B cell (primary cell): ENCODE measurements at regions of chr2 and their contacts with region 1.

Region 1: DNA sequence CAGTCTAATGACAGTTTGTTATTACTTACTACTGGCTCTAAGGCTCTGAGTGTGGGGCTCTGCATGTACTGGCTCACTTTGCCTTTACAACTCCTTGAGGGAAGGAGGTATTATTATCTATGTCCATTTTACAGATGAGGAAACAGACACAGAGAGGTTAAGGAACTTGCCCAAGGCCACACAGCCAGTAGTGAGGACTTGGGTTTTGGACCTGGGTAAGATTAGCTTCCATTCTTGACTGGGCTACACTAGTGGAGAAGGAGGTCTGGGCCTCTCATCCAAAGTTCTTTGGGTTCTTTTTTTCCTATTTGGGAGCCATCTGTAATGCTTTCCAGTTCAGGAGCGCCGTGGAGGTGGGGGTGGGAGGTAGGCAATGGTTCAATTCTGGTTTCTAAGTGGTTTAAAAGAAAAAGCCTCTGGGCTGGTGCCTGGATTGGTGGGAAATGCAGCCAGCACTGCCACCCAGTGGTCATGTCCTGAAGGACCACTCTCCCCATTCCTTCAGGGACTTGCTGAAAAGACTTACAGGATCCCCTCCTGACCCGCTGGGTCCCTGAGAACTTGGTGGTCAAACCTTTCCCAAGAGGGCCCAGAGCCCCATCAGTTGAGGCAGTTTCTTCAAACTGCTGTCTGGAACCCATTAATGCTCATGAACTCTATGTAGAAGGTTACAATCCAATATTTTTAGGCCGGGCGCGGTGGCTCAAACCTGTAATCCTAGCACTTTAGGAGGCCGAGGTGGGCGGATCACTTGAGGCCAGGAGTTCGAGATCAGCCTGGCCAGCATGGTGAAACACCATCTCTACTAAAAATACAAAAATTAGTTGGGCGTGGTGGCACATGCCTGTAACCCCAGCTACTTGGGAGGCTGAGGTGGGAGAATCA is 38.6 kb upstream of the NOTO start:
- DNase-seq: peak; percentile 71
- ATAC-seq: peak; percentile 84
- H3K4me3 ChIP-seq: no peak overlapping the region
- H3K4me3 Mint-ChIP-seq: no peak overlapping the region
- H3K27ac ChIP-seq: no peak overlapping the region
- H3K27ac Mint-ChIP-seq: no peak overlapping the region
- H3K4me1 ChIP-seq: no peaks in the 10 kb centered on the region
- H3K4me1 Mint-ChIP-seq: no peaks in the 10 kb centered on the region
- H3K27me3 ChIP-seq: peaks cover 0 to 3% (median 0%) of the 10 kb centered on the region in 4 experiments
- H3K27me3 Mint-ChIP-seq: peaks cover 24% of the 10 kb centered on the region
- CTCF ChIP-seq: peak; percentile 82

Region 2: GRCh38 chr2:72892506-72893173 is 271.1 kb before region 1 on chr2:
- CTCF ChIA-PET with region 1: interaction called, 8 read pairs
- POLR2A ChIA-PET with region 1: no interaction called
- intact Hi-C with region 1: loop called (anchors 1 kb)
- DNase-seq: peak; percentile 64
- ATAC-seq: peak; percentile 83
- H3K4me3 ChIP-seq: no peak overlapping the region
- H3K4me3 Mint-ChIP-seq: no peak overlapping the region
- H3K27ac ChIP-seq: no peak overlapping the region
- H3K27ac Mint-ChIP-seq: no peak overlapping the region
- H3K4me1 ChIP-seq: peaks cover 9 to 13% of the 10 kb centered on the region in 2 donors
- H3K4me1 Mint-ChIP-seq: peaks cover 9% of the 10 kb centered on the region
- H3K27me3 ChIP-seq: peaks cover 0 to 83% (median 26%) of the 10 kb centered on the region in 4 experiments
- H3K27me3 Mint-ChIP-seq: peaks cover 53% of the 10 kb centered on the region
- CTCF ChIP-seq: peak; percentile 66

Region 3: DNA sequence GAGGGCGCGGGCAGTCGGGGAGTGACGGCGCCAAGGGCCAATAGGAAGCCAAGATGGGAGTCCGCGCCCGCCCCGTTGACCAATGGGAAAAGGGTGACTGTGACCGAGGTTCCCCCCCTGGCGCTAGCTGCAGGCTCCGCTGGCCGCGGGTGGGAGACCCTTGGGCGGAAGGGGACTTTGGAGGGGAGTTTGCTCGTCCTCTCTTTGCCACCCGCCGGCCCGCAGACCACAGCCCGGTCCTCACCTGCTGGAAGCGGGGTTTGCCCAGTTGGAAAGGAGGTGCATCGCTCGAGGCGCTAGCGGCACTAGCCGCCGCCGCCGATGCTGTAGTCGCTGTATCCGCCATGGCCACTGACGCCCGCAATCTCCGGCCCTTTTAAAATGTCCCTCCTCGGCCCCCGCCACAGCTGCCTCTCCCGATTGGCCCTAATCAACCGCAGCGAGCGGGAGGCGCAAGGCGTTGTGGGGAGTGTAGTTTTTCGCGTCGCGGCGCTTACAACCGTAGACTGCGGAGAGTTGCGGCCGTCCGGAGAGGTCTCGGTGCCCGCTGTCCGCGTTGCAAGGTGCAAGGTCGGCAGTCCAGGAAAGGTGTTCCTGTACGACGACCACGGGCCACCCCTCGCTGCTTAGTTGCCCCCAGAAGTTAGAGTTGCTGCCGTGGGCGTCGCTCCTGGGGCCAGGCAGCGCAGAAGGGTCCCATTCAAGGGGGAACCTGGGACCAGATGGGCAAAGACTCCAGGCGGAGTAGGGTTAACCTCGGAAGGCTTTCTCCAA is 92.2 kb before region 1 on chr2 and contains the start of gene SFXN5:
- CTCF ChIA-PET with region 1: no interaction called
- POLR2A ChIA-PET with region 1: no interaction called
- intact Hi-C with region 1: loop called (anchors 5 kb)
- DNase-seq: peak; percentile 98
- ATAC-seq: peak; percentile 90
- H3K4me3 ChIP-seq: peak within 1 kb of the TSS; percentile 51 to 99 (median 86)
- H3K4me3 Mint-ChIP-seq: peak within 1 kb of the TSS; percentile 93
- H3K27ac ChIP-seq: peak within 1 kb of the TSS; percentile 77 to 84
- H3K27ac Mint-ChIP-seq: peak within 1 kb of the TSS; percentile 95
- H3K4me1 ChIP-seq: peaks cover 6 to 17% of the 10 kb centered on the region in 2 donors
- H3K4me1 Mint-ChIP-seq: peaks cover 24% of the 10 kb centered on the region
- H3K27me3 ChIP-seq: no peaks in the 10 kb centered on the region
- H3K27me3 Mint-ChIP-seq: no peaks in the 10 kb centered on the region
- CTCF ChIP-seq: no peak
- total RNA-seq, gene SFXN5: 16.9 and 17.8 TPM in 2 replicates

Region 4: DNA sequence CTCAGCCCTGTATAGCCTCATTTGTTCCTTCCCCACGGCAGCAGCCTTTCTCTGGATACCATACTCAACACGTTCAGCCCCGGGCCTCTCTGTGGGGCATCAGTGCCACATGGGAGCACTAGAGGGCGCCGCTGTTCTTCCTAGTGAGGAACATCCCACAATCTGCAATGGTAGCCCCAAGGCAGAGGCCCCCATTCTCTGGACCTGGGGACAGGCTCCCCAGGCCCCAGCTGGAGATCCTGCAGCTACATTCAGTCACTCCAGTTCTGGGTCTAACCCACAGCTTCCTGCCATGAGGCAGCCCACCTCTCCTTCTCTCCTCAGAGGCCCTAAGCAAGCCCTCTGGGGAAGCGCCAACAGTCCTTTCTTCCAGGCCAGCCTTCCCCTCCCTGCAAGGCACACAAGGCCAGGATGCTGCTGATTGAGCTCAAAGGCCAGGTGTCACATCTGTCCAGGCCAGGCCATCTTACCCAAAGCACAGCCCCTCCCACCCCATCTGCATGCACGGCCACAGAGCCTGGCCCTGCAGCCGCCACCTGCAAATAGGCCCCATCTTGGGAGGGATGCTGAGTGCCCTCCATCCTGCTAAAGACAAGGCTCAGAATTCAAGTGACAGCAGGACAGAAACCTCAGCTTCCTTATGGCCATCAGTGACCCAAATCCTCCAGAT is 77.9 kb before region 1 on chr2:
- CTCF ChIA-PET with region 1: interaction called, 26 read pairs
- POLR2A ChIA-PET with region 1: no interaction called
- intact Hi-C with region 1: loop called (anchors 1 kb)
- DNase-seq: peak; percentile 80
- ATAC-seq: peak; percentile 90
- H3K4me3 ChIP-seq: no peak overlapping the region
- H3K4me3 Mint-ChIP-seq: no peak overlapping the region
- H3K27ac ChIP-seq: no peak overlapping the region
- H3K27ac Mint-ChIP-seq: no peak overlapping the region
- H3K4me1 ChIP-seq: no peaks in the 10 kb centered on the region
- H3K4me1 Mint-ChIP-seq: no peaks in the 10 kb centered on the region
- H3K27me3 ChIP-seq: peaks cover 0 to 4% (median 2%) of the 10 kb centered on the region in 4 experiments
- H3K27me3 Mint-ChIP-seq: peaks cover 11% of the 10 kb centered on the region
- CTCF ChIP-seq: peak; percentile 78